ENCODE measurements at regions of chr1 and their contacts with region 1.

Region 1: GRCh38 chr1:26145041-26145959 is 13.6 kb upstream of the FAM110D start:
- DNase-seq: no peak
- H3K4me3 ChIP-seq: no peak overlapping the region
- H3K27me3 ChIP-seq: peaks cover 10% of the 10 kb centered on the region
- CTCF ChIP-seq: peak; percentile 78

Region 2: GRCh38 chr1:26035959-26036755 is 109.1 kb before region 1 on chr1:
- CTCF ChIA-PET with region 1: interaction called, 90 read pairs
- POLR2A ChIA-PET with region 1: no interaction called
- DNase-seq: no peak
- H3K4me3 ChIP-seq: peak overlapping the region; percentile 90
- H3K27me3 ChIP-seq: peaks cover 4% of the 10 kb centered on the region; the same call in 1 of the 2 replicates
- CTCF ChIP-seq: peak; percentile 99

Region 3: GRCh38 chr1:26097696-26098095 is 47.6 kb before region 1 on chr1:
- CTCF ChIA-PET with region 1: interaction called, 129 read pairs
- POLR2A ChIA-PET with region 1: no interaction called
- DNase-seq: no peak
- H3K4me3 ChIP-seq: no peak overlapping the region
- H3K27me3 ChIP-seq: peaks cover 8% of the 10 kb centered on the region
- CTCF ChIP-seq: no peak

Region 4: DNA sequence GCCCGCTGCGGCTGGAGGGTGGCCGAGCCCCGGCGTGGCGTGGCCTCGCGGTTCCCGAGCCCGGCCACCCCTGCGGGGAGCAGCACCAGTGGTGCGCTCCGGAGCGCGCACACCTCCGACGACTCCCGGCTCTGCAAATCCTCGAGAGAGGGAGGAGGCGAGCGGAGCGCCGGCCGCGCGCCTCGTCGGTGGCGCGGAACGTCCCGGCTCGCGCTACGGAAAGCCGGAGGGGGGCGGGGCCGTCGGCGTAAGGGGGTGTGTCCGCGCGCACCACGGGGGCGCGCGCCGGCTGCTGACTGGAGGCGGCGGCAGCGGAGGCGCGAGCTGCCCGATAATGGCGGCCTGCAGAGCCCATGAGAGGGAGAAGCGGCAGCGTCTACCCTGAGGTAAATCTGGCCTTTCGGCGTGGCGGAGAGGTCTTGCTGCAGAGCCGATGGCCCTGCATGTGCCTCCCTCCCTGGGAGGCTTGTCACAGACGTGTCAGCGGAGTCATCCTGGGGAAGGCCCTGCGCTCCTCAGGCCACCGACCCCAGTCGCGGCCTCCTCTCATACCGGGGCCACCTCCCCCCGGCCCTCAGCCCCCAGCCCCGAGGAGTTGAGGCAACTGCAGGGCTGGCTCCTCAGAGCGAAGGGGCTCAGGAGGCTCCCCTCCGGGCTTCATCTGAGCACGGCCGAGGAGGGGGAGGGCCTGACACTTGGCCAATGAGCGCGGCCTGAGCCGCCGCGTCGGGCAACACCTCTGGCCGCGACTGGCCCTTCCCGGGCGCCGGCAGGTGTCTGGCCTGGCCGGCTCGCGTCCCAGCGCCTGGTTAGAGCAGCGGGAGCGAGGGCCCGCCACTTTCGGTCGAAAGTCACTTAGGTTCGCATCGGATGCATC is 33.5 kb before region 1 on chr1 and contains the start of gene PDIK1L:
- CTCF ChIA-PET with region 1: interaction called, 32 read pairs
- POLR2A ChIA-PET with region 1: no interaction called
- DNase-seq: peak; percentile 74
- H3K4me3 ChIP-seq: peak within 1 kb of the TSS; percentile 98
- H3K27me3 ChIP-seq: no peaks in the 10 kb centered on the region
- CTCF ChIP-seq: no peak
- polyA plus RNA-seq, gene PDIK1L: 1.4 and 2.9 TPM in 2 replicates

Region 5: DNA sequence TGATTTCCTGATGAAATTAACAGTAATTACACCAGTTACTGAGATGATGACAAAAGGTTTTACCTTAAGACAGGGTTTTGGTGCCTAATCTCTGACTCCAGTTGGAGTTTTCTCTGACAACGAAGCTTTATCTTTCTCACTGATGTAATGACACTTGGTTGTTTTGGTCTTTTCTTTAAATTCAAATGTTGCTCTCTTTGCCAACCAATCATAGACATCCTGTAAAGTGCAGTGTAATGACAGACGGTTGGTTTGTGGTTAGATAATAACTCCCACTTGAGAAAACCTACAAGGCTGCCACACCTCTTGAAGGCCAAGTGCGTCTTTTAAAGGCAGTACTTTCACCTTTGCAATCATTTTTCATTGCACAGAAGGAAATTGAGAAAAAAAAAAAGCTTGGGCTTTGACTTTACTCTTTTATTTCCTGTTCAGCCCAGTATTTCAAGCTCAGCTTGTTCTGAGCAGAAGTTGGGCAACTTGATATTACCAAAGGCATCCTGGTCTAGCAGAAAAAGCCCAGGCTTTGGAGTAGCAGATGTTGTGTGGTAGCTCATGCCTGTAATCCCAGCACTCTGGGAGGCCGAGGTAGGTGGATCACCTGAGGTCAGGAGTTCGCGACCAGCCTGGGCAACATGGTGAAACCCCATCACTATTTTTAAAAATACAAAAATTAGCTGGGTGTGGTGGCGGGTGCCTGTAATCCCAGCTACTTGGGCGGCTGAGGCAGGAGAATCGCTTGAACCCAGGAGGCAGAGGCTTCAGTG is 18.8 kb before region 1 on chr1:
- CTCF ChIA-PET with region 1: interaction called, 76 read pairs
- POLR2A ChIA-PET with region 1: no interaction called
- DNase-seq: no peak
- H3K4me3 ChIP-seq: no peak overlapping the region
- H3K27me3 ChIP-seq: peaks cover 5% of the 10 kb centered on the region
- CTCF ChIP-seq: no peak

Region 6: DNA sequence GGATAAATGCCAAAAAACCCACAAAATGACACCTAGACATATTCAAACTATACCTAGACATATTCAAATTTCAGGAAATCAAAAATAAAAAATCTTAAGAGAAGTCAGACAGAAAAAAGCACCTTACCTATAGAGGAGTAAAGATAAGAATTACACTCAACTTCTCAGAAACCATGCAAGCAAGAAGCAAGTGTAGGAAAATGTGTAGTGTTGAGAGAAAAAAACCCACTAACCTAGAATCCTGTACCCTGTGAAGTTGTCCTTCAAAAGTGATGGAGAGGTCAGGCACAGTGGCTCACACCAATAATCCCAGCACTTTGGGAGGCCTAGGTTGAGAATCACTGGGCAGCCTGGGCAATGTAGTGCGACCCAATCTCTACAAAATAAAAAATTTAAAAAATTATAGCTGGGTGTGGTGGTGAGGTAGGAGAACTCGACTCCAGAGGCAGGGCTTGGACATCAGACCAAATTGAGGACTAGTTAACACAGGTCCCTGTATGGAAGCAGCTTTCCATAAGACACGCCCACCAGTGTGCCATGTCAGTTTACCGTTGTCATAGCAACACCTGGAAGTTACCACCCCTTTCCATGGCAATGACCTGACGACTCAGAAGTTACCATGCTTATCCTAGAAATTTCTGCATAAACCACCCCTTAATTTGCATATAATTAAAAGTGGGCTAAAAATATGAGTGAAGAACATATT is 13.0 kb before region 1 on chr1:
- CTCF ChIA-PET with region 1: interaction called, 76 read pairs
- POLR2A ChIA-PET with region 1: no interaction called
- DNase-seq: no peak
- H3K4me3 ChIP-seq: no peak overlapping the region
- H3K27me3 ChIP-seq: peaks cover 5% of the 10 kb centered on the region
- CTCF ChIP-seq: no peak

Region 7: GRCh38 chr1:26156704-26157038 is 11.4 kb after region 1 on chr1:
- CTCF ChIA-PET with region 1: interaction called, 51 read pairs
- POLR2A ChIA-PET with region 1: no interaction called
- DNase-seq: no peak
- H3K4me3 ChIP-seq: no peak overlapping the region
- H3K27me3 ChIP-seq: peaks cover 24% of the 10 kb centered on the region
- CTCF ChIP-seq: no peak

Measured in BJ (cell line).